MCF 10A (cell line): ENCODE measurements at regions of chr1 and their contacts with region 1.

Region 1: GRCh38 chr1:58652651-58653184 is 47.1 kb downstream of the MYSM1 start:
- DNase-seq: peak; percentile 84
- H3K4me3 Mint-ChIP-seq: no peak overlapping the region
- H3K27ac Mint-ChIP-seq: no peak overlapping the region
- H3K4me1 Mint-ChIP-seq: peaks cover 22% of the 10 kb centered on the region
- H3K27me3 Mint-ChIP-seq: no peaks in the 10 kb centered on the region
- CTCF ChIP-seq: peak; percentile 75

Region 2: DNA sequence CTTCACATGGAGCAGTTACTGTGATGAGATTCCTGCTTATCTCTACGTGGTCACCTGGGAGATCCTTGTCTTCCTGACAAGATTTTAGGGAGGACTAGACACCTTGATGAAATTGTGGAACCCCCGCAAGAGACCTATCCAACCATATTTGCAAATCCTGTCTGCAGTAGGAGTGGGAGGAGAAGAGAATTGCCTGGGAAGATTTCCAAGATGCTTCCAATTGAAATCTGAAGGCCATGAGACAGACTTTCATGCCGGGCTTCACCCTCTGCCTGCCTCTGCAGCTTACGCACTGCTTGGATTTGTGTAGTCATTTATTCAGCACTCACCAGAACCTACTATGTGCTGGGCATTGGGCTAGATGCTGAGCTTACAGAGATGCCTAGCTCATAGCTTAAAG is 212.8 kb before region 1 on chr1:
- CTCF ChIA-PET with region 1: no interaction called
- POLR2A ChIA-PET with region 1: no interaction called
- intact Hi-C with region 1: no loop called
- DNase-seq: no peak
- H3K4me3 Mint-ChIP-seq: no peak overlapping the region
- H3K27ac Mint-ChIP-seq: no peak overlapping the region
- H3K4me1 Mint-ChIP-seq: no peaks in the 10 kb centered on the region
- H3K27me3 Mint-ChIP-seq: no peaks in the 10 kb centered on the region
- CTCF ChIP-seq: no peak

Region 3: GRCh38 chr1:58546520-58547308 is 106.0 kb before region 1 on chr1 and contains the start of gene OMA1:
- CTCF ChIA-PET with region 1: interaction called, 14 read pairs
- POLR2A ChIA-PET with region 1: interaction called, 15 read pairs
- intact Hi-C with region 1: loop called (anchors 1 kb)
- DNase-seq: peak; percentile 93
- H3K4me3 Mint-ChIP-seq: peak within 1 kb of the TSS; percentile 92
- H3K27ac Mint-ChIP-seq: peak within 1 kb of the TSS; percentile 95
- H3K4me1 Mint-ChIP-seq: peaks cover 20% of the 10 kb centered on the region
- H3K27me3 Mint-ChIP-seq: no peaks in the 10 kb centered on the region
- CTCF ChIP-seq: peak; percentile 84
- total RNA-seq, gene OMA1: 15.7 and 17.9 TPM in 2 replicates

Region 4: GRCh38 chr1:58573705-58574591 is 78.8 kb before region 1 on chr1:
- CTCF ChIA-PET with region 1: interaction called, 46 read pairs
- POLR2A ChIA-PET with region 1: interaction called, 26 read pairs
- intact Hi-C with region 1: loop called (anchors 1 kb)
- DNase-seq: peak; percentile 69
- H3K4me3 Mint-ChIP-seq: peak overlapping the region; percentile 89
- H3K27ac Mint-ChIP-seq: peak overlapping the region; percentile 70
- H3K4me1 Mint-ChIP-seq: peaks cover 29% of the 10 kb centered on the region
- H3K27me3 Mint-ChIP-seq: no peaks in the 10 kb centered on the region
- CTCF ChIP-seq: no peak

Region 5: DNA sequence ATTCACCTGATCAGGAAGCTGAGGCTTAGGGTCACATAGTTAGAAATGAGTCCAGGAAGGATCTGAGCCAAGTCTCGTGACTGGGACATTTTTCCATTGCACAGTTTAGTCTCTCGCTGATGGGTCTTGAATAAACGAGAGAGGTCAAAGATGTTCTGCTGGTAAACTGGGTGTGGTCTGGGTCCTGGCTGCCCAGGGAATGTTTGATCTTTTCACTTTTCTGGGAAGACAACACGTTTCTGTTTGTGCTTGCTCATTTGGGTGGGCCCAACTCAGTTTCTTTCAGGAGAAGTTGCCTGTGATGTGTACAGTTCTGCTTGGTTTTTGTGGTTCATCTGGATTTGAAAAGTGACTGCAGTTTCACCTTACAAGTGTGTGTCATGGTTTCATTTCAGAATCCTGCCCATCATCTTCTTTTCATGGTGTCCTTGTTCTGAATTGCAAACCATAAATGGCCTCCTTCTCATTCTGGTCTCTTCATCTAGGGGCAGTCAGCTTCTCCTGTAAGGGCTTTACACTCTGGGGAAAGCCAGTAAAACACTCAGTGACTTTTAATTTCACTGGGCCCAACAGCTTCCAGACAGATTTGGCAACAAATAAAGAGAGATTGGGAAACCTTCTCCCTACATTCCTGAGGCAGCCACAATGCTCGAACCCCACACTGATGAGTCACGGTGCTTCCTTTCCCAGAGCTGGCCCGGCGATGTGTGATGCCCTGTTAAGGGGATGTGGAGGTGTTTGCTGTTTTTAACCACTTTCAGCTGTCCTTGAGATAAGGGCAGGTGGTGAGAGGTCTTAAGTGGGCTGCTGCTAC is 68.4 kb before region 1 on chr1:
- CTCF ChIA-PET with region 1: interaction called, 30 read pairs
- POLR2A ChIA-PET with region 1: interaction called, 9 read pairs
- intact Hi-C with region 1: no loop called
- DNase-seq: peak; percentile 98
- H3K4me3 Mint-ChIP-seq: peak overlapping the region; percentile 55
- H3K27ac Mint-ChIP-seq: peak overlapping the region; percentile 92
- H3K4me1 Mint-ChIP-seq: peaks cover 36% of the 10 kb centered on the region
- H3K27me3 Mint-ChIP-seq: no peaks in the 10 kb centered on the region
- CTCF ChIP-seq: no peak

Region 6: GRCh38 chr1:58618303-58618702 is 34.4 kb before region 1 on chr1:
- CTCF ChIA-PET with region 1: interaction called, 13 read pairs
- POLR2A ChIA-PET with region 1: interaction called, 4 read pairs
- intact Hi-C with region 1: no loop called
- DNase-seq: peak; percentile 99
- H3K4me3 Mint-ChIP-seq: peak overlapping the region; percentile 24
- H3K27ac Mint-ChIP-seq: peak overlapping the region; percentile 91
- H3K4me1 Mint-ChIP-seq: peaks cover 36% of the 10 kb centered on the region
- H3K27me3 Mint-ChIP-seq: no peaks in the 10 kb centered on the region
- CTCF ChIP-seq: no peak

Region 7: GRCh38 chr1:58664881-58665280 is 12.2 kb after region 1 on chr1:
- CTCF ChIA-PET with region 1: interaction called, 24 read pairs
- POLR2A ChIA-PET with region 1: no interaction called
- intact Hi-C with region 1: no loop called
- DNase-seq: no peak
- H3K4me3 Mint-ChIP-seq: no peak overlapping the region
- H3K27ac Mint-ChIP-seq: no peak overlapping the region
- H3K4me1 Mint-ChIP-seq: no peaks in the 10 kb centered on the region
- H3K27me3 Mint-ChIP-seq: no peaks in the 10 kb centered on the region
- CTCF ChIP-seq: no peak

Region 8: GRCh38 chr1:58683519-58683918 is 30.8 kb after region 1 on chr1:
- CTCF ChIA-PET with region 1: no interaction called
- POLR2A ChIA-PET with region 1: no interaction called
- intact Hi-C with region 1: no loop called
- DNase-seq: no peak
- H3K4me3 Mint-ChIP-seq: no peak overlapping the region
- H3K27ac Mint-ChIP-seq: no peak overlapping the region
- H3K4me1 Mint-ChIP-seq: peaks cover 11% of the 10 kb centered on the region
- H3K27me3 Mint-ChIP-seq: no peaks in the 10 kb centered on the region
- CTCF ChIP-seq: no peak

Region 9: DNA sequence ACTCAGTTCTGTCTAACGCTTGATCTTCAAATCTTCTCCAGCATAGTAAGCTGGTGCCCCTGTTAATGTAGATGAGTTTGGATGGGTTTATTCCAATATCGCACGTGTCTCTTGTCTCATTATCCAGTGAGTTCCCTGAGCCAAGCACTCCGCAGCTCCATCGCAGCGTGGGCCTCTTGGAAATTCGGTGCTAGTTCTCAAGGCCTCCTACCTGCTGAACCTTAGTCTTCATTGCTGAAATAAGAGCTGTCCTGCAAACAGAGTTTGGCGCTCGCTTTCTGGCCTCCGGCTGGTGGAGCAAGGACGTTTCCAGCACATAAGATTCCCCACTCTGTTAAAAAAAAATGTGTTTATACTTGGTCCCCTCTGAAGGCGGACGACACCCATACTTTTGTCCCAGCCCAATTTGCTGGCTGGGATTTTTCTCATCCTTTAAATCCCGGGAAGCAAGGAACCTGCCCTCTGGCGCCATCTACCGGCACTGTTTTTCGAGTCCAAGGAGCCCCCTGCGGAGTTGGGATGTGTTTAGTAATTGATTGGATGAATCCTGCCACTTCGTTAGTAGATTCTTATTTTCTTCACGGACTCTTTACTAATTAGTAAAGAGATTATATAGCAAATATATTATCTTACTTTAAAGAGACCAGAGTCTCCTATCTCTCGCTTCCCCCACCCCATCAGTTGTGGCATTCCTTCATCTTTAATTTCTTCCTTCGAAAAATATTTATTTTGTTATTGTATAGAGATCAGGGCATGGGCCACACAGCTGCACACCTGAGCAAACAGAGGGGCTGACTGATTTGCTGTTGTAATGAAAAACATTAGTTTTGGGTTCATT is 116.5 kb after region 1 on chr1:
- CTCF ChIA-PET with region 1: no interaction called
- POLR2A ChIA-PET with region 1: no interaction called
- intact Hi-C with region 1: loop called (anchors 2 kb)
- DNase-seq: peak; percentile 78
- H3K4me3 Mint-ChIP-seq: no peak overlapping the region
- H3K27ac Mint-ChIP-seq: no peak overlapping the region
- H3K4me1 Mint-ChIP-seq: peaks cover 29% of the 10 kb centered on the region
- H3K27me3 Mint-ChIP-seq: no peaks in the 10 kb centered on the region
- CTCF ChIP-seq: peak; percentile 67

Region 10: DNA sequence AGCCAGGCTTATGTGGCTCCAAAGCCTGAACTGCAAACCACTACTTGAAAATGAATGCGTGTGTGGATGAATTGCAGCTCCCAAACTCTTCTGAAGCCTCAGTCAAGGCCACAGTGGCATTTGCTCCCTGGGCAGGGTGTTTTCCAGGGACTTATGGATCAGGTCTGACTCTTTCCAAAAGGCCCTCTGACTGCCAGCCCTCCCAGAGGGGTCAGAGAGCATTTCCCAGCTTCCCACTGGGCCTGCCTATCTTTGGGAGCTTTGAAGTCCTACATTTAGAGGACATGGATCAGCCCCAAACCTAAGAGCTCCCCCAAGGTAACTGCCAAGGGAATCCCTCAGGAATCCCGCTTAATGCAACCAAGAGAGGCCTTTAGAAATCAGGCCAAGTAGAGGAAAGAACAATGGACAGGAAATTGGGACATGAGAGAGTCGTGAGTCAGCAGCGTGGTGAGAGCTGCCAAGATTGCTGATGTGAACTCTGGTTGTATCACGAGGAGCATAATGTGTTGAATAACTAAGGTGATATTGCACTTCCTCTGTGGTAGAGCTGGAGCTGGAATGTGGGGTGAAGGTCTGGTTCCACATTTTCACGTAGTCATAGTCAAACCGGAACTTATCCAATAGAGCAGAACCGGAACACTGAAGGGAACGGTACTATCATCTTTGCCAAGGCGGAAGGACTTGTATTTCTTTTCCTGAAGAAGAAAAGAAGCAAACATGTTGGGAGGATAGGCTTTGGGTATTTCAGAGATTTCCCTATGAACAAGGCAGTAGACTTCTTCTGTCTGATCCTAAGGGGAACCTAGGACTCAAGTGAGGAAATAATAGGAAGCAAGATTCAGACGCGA is 230.5 kb after region 1 on chr1:
- CTCF ChIA-PET with region 1: no interaction called
- POLR2A ChIA-PET with region 1: no interaction called
- intact Hi-C with region 1: no loop called
- DNase-seq: peak; percentile 99
- H3K4me3 Mint-ChIP-seq: no peak overlapping the region
- H3K27ac Mint-ChIP-seq: peak overlapping the region; percentile 8
- H3K4me1 Mint-ChIP-seq: peaks cover 44% of the 10 kb centered on the region
- H3K27me3 Mint-ChIP-seq: no peaks in the 10 kb centered on the region
- CTCF ChIP-seq: no peak

Region 11: GRCh38 chr1:58903514-58904298 is 251.0 kb after region 1 on chr1:
- CTCF ChIA-PET with region 1: no interaction called
- POLR2A ChIA-PET with region 1: no interaction called
- intact Hi-C with region 1: no loop called
- DNase-seq: peak; percentile 82
- H3K4me3 Mint-ChIP-seq: peak overlapping the region; percentile 72
- H3K27ac Mint-ChIP-seq: peak overlapping the region; percentile 68
- H3K4me1 Mint-ChIP-seq: peaks cover 13% of the 10 kb centered on the region
- H3K27me3 Mint-ChIP-seq: no peaks in the 10 kb centered on the region
- CTCF ChIP-seq: no peak